H1 (cell line): ENCODE measurements at regions of chr17 and their contacts with region 1.

Region 1: DNA sequence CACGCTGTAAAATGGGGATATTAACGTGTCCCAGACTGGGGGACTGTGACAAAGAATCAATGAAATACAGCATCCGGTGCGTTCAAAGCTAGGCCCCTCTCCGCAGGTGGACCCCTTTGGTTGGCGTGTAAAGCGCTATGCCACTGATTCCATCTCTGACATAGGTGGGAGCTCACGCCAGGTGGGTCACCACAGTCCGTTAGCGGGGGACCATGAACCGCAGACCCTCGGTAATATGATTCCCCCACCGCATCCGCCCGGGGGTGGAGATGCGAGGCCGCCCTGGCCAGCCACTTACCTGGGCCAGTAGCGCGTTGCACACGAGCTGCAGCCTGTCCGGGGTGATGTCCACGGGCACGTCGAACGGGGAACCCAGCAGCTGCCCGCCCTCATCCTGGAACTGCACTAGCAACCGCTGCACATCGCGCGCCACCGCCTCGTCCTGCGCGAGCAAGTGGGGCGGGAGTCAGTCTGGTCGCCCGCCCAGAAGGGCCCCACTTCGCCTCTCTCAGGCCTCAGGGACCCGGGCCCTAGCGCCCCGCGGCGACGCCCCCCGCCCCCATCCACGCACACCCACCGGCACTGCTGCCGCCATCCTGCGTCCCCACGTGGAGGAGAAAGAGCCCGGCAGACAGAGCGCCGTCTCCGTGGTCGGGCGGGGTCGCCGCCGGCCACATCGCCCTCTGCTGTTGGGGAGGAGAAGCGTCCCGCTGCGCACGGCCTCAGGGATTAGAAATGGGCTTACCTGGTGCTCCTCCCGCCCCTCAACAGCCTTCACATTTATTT is at the start of gene NLE1:
- DNase-seq: peak; percentile 66 to 98
- H3K4me3 ChIP-seq: peak within 1 kb of the TSS; percentile 80 to 100 (median 92)
- H3K27ac ChIP-seq: peak within 1 kb of the TSS; percentile 16; the same call in 1 of the 2 replicates
- H3K4me1 ChIP-seq: no peaks in the 10 kb centered on the region; a peak in 1 of 7 replicates
- H3K27me3 ChIP-seq: no peaks in the 10 kb centered on the region
- CTCF ChIP-seq: peak; percentile 86 to 98 (median 92)
- EP300 ChIP-seq: peak in 1 of 2 experiments; percentile 53; a peak in 1 of 3 replicates
- POLR2A ChIP-seq: peak in 1 of 2 experiments; percentile 77; a peak in 2 of 3 replicates
- RAD21 ChIP-seq: peak; percentile 28 to 49
- total RNA-seq, gene NLE1: 50.1 and 51.5 TPM in 2 replicates

Region 2: DNA sequence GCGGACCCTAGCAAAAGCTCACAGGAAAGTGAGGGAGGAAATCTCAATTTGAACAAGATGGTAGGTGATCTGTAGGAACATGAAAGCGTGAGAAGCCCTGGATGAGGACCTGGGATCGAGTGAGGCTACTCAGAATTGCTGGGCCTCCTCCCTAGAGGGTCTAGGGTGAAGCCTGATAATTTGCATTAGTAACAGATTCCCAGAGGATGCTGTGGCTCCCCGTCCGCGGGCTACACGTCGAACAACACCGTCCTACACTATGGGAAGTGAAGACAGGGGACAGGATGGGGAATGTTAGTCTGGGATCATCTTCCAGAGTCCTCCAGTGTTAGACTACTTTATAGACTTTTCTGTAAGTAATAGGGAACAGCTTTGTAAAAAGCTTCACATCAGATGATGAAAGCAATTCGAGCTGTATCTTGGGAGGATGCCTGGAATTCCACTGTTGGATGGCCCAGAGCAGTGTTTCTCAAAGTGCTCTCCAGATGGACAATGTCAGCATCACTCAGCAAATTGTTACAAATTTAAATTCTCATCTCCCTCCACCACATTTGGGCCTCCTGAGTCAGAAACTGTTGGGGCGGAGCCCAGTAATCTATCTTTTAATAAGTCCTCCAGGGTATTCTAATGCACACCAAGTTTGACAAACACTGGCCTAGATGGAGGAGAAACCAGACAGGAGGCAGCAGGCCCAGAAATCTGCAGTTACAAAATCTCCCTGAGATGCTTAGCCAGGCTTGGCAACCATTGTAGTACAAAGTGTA is 13.9 kb before region 1 on chr17:
- CTCF ChIA-PET with region 1: interaction called, 6 read pairs
- POLR2A ChIA-PET with region 1: interaction called, 84 read pairs
- DNase-seq: no peak
- H3K4me3 ChIP-seq: no peak overlapping the region
- H3K27ac ChIP-seq: no peak overlapping the region
- H3K4me1 ChIP-seq: no peaks in the 10 kb centered on the region
- H3K27me3 ChIP-seq: peaks cover 0 to 2% (median 0%) of the 10 kb centered on the region in 4 experiments; a peak in 2 of 7 replicates
- CTCF ChIP-seq: no peak
- EP300 ChIP-seq: no peak
- POLR2A ChIP-seq: no peak
- RAD21 ChIP-seq: no peak

Region 3: GRCh38 chr17:35176897-35177296 is 35.0 kb after region 1 on chr17:
- CTCF ChIA-PET with region 1: no interaction called
- POLR2A ChIA-PET with region 1: no interaction called
- DNase-seq: no peak
- H3K4me3 ChIP-seq: no peak overlapping the region
- H3K27ac ChIP-seq: no peak overlapping the region
- H3K4me1 ChIP-seq: no peaks in the 10 kb centered on the region
- H3K27me3 ChIP-seq: no peaks in the 10 kb centered on the region; a peak in 1 of 7 replicates
- CTCF ChIP-seq: no peak
- EP300 ChIP-seq: no peak
- POLR2A ChIP-seq: no peak
- RAD21 ChIP-seq: no peak